PC-9 (cell line): ENCODE measurements at regions of chr17 and their contacts with region 1.

Region 1: DNA sequence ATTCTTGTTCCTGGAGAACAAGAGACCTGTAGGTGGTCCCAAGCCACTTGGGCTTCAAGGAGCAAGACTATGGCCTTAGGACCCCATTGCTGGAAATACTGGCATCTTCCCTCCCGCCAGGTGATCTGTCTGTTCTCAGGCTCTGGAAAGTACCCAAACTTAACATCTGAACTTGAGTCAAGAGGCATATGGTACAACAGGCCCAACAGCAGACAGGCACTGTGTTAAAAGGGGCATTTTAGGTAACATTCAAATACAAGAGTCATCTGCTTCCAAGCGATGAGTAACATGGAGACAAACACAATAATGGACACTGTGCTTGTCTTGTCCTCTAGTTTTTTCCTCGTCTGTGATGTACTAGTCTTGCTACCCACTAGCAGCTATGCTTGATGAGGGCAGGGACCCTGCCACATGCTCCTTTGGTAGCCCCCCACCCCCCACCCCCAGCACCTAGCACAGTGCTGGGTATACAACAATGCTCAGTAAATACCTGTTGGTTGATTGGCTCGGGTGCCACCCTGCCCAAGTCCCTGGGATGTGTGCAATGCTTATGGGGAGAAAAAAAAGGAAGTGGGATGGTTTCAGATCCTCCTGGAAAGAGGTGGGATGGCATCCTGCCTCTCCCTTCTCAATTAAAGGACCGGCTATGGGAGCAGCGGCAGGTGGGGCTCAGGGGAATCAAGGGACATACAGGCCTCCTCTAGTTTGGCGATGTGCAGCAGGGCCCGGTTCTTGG is 19.4 kb downstream of the CSF3 start:
- DNase-seq: no peak
- H3K4me3 ChIP-seq: no peak overlapping the region
- H3K27ac ChIP-seq: no peak overlapping the region
- H3K4me1 ChIP-seq: no peaks in the 10 kb centered on the region
- H3K27me3 ChIP-seq: no peaks in the 10 kb centered on the region
- CTCF ChIP-seq: no peak

Region 2: GRCh38 chr17:40021451-40021971 is 13.1 kb before region 1 on chr17:
- CTCF ChIA-PET with region 1: no interaction called
- POLR2A ChIA-PET with region 1: interaction called, 14 read pairs
- intact Hi-C with region 1: no loop called
- DNase-seq: peak; percentile 84 to 90
- H3K4me3 ChIP-seq: no peak overlapping the region
- H3K27ac ChIP-seq: peak overlapping the region; percentile 43; the same call in 1 of the 2 replicates
- H3K4me1 ChIP-seq: peaks cover 63% of the 10 kb centered on the region
- H3K27me3 ChIP-seq: no peaks in the 10 kb centered on the region
- CTCF ChIP-seq: no peak